ENCODE measurements at regions of chr12 and their contacts with region 1.

Region 1: GRCh38 chr12:40312982-40313576 is 88.3 kb downstream of the LRRK2 start:
- DNase-seq: peak; percentile 2
- ATAC-seq: no peak
- H3K4me3 ChIP-seq: no peak overlapping the region
- H3K27ac ChIP-seq: no peak overlapping the region
- H3K4me1 ChIP-seq: no peaks in the 10 kb centered on the region
- H3K27me3 ChIP-seq: no peaks in the 10 kb centered on the region
- CTCF ChIP-seq: no peak
- EP300 ChIP-seq: no peak
- POLR2A ChIP-seq: no peak
- RAD21 ChIP-seq: no peak

Region 2: DNA sequence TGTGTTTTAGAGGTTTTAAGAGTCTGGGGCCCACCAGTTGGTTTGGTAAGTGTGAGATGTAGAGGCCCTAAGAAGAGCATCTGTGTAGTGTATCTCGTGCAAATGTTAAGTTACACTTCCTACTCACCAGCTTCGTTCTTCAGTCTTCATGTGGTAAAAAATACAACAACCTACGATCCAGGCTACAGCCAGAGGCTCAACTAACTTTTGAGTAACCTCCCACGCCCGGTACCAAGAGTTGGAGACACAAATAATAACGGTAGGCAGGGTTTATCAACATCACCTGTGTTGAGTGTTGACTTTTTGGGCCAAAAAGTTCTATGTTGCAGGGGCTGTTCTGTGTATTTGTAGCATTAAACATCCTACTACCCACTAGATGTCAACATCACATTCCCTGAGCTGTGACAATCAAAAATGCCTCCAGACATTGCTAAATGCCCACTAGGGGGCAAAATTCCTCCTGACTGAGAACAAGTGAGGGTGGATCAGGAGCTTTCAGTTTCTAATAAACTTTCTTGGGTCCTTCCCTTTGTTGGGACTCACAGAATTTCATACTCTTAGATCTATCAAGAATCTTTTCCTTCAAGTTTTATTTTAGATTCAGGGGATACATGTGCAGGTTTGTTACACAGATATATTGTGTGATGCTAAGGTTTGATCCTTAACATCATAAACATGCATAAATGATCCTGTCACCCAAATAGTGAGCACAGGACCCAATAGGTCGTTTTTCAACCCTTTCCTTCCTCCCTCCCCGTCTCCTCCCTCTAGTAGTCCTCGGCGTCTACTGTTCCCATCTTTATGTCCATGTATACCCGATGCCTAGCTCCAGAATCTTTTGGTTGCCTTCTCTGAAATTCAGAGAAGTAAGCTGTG is 301.9 kb before region 1 on chr12:
- CTCF ChIA-PET with region 1: no interaction called
- POLR2A ChIA-PET with region 1: no interaction called
- in situ Hi-C with region 1: no loop called
- intact Hi-C with region 1: loop called (anchors 5 kb)
- DNase-seq: peak; percentile 65
- ATAC-seq: peak; percentile 97
- H3K4me3 ChIP-seq: no peak overlapping the region
- H3K27ac ChIP-seq: no peak overlapping the region
- H3K4me1 ChIP-seq: no peaks in the 10 kb centered on the region
- H3K27me3 ChIP-seq: no peaks in the 10 kb centered on the region
- CTCF ChIP-seq: peak; percentile 63
- EP300 ChIP-seq: no peak
- POLR2A ChIP-seq: no peak
- RAD21 ChIP-seq: no peak

Region 3: DNA sequence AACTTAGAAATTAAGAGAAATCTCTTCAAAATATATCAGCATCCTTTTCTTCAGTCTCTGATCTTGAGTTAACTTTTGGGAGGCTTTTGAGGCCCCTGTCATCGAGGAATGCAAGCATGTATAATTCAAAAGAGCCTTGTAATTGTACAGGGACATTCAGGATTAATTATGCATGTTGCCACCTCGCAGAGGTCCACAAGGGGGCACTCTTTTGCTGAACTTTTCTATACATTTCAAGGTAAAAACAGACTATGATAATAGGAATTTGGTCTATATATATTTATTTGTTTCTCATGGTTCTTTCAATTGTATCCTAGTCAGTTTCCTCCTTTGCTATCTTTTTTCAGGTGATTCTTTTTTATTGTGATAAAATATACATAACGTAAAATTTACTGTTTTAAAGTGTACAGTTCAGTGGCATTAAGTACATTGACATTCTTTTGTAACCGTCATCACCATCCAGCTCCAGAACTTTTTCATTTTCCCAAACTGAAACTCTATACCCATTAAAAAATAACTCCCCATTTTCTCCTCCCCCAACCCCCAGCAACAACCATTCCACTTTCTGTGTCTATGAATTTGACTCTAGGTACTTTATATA is 160.2 kb before region 1 on chr12:
- CTCF ChIA-PET with region 1: interaction called, 11 read pairs
- POLR2A ChIA-PET with region 1: no interaction called
- in situ Hi-C with region 1: loop called (anchors 5 kb)
- intact Hi-C with region 1: loop called (anchors 1 kb)
- DNase-seq: peak; percentile 20
- ATAC-seq: peak; percentile 56; the same call in 2 of the 3 replicates
- H3K4me3 ChIP-seq: no peak overlapping the region
- H3K27ac ChIP-seq: no peak overlapping the region
- H3K4me1 ChIP-seq: no peaks in the 10 kb centered on the region
- H3K27me3 ChIP-seq: no peaks in the 10 kb centered on the region; a peak in 1 of 5 replicates
- CTCF ChIP-seq: peak; percentile 55
- EP300 ChIP-seq: no peak
- POLR2A ChIP-seq: no peak
- RAD21 ChIP-seq: no peak

Region 4: DNA sequence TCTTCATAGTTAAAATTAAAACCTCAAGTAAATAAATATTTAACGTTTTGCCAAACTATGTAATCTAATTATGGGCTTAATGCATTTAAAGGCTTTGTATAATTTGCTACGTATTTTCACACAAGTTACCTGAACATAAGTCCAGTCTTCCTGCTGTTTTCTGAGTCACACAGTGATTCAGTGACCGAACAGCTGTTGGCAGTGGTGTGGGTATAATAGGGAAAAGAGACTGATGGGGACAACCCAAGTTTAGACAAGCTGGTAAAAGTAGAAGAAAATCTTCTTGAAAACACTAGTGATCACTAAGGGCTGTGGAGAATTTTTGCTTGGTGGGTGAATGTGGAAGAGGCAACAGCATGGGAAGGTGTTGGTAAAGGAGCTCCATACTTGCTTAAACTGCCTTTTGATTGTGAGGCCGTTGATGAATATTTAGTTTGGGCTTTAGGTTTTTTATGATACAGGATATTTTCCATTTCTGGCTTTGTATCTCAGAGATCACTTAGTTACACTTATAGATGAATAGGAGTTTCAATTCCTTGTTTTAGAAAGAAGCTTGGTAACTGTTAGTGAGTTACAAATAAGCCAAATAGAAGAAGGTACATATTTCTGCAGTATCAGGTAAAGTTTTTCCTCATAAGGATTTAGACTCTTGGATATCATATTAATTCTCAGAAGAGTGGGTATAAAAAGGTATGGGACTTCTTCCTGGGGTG is 64.3 kb before region 1 on chr12:
- CTCF ChIA-PET with region 1: no interaction called
- POLR2A ChIA-PET with region 1: no interaction called
- in situ Hi-C with region 1: no loop called
- intact Hi-C with region 1: loop called (anchors 10 kb)
- DNase-seq: no peak
- ATAC-seq: no peak
- H3K4me3 ChIP-seq: no peak overlapping the region
- H3K27ac ChIP-seq: no peak overlapping the region
- H3K4me1 ChIP-seq: no peaks in the 10 kb centered on the region
- H3K27me3 ChIP-seq: no peaks in the 10 kb centered on the region; a peak in 1 of 5 replicates
- CTCF ChIP-seq: no peak
- EP300 ChIP-seq: no peak
- POLR2A ChIP-seq: no peak
- RAD21 ChIP-seq: no peak

Measured in HepG2 (cell line).